ENCODE measurements at regions of chr3 and their contacts with region 1.

Region 1: GRCh38 chr3:44439499-44440295 is 37.8 kb downstream of the ZNF445 start:
- DNase-seq: no peak
- ATAC-seq: peak; percentile 90
- H3K4me3 Mint-ChIP-seq: peak overlapping the region; percentile 66
- H3K27ac Mint-ChIP-seq: peak overlapping the region; percentile 92
- H3K4me1 Mint-ChIP-seq: peaks cover 21% of the 10 kb centered on the region
- H3K27me3 Mint-ChIP-seq: no peaks in the 10 kb centered on the region
- CTCF ChIP-seq: no peak

Region 2: GRCh38 chr3:44363591-44363990 is 76.1 kb before region 1 on chr3:
- CTCF ChIA-PET with region 1: no interaction called
- POLR2A ChIA-PET with region 1: no interaction called
- intact Hi-C with region 1: no loop called
- DNase-seq: no peak
- ATAC-seq: no peak
- H3K4me3 Mint-ChIP-seq: no peak overlapping the region
- H3K27ac Mint-ChIP-seq: no peak overlapping the region
- H3K4me1 Mint-ChIP-seq: no peaks in the 10 kb centered on the region
- H3K27me3 Mint-ChIP-seq: no peaks in the 10 kb centered on the region
- CTCF ChIP-seq: no peak

Region 3: DNA sequence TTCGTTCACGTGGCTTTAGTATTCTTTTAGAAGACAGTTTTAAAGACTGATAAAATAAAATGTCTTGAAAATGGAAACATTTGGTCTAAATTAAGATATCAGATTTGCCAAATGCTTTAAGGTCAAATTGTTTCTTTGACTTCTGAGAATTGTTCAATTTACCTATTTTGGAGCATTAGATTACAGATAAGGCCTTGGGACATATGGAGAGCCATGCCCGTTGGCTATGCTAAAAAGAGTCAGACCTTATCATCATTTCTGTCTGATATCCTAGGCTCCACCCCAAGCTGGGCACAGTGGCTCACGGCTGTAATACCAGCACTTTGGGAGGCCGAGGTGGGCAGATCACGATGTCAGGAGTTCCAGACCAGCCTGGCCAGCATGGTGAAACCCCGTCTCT is 24.8 kb after region 1 on chr3:
- CTCF ChIA-PET with region 1: no interaction called
- POLR2A ChIA-PET with region 1: interaction called, 10 read pairs
- intact Hi-C with region 1: no loop called
- DNase-seq: no peak
- ATAC-seq: no peak
- H3K4me3 Mint-ChIP-seq: no peak overlapping the region
- H3K27ac Mint-ChIP-seq: no peak overlapping the region
- H3K4me1 Mint-ChIP-seq: no peaks in the 10 kb centered on the region
- H3K27me3 Mint-ChIP-seq: no peaks in the 10 kb centered on the region
- CTCF ChIP-seq: no peak